ENCODE measurements at regions of chr2 and their contacts with region 1.

Region 1: DNA sequence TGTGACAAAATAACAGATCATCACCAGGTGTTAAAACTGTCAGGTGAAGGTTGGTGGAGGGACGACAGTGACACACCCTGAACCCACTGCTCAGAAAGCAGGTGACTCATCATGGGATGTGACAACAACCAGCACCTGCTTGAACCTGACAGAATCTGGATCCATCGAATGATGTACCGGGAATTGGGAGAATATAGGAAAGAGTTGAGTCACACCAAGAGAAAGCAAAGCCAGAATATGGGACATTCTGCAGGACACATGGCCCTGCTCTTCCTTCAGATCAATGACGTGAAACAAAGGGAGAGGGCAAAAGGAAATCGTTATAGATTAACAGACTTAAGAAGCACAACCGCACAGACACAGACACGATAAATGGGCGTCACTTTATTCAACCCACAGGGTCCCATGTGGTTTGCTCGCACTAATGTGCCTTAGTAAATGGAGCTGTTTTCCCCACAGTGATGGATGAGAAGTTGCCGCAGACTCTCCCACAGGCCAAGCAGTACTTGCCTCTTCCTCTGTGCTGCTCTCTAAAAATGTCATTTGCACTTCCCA is 100.1 kb downstream of the CRACDL start:
- DNase-seq: no peak
- H3K4me3 ChIP-seq: no peak overlapping the region
- H3K27ac ChIP-seq: no peak overlapping the region
- H3K4me1 ChIP-seq: no peaks in the 10 kb centered on the region
- H3K27me3 ChIP-seq: no peaks in the 10 kb centered on the region
- CTCF ChIP-seq: no peak
- POLR2A ChIP-seq: no peak

Region 2: GRCh38 chr2:98649135-98649991 is 186.5 kb before region 1 on chr2:
- intact Hi-C with region 1: loop called (anchors 10 kb)
- DNase-seq: peak; percentile 93
- H3K4me3 ChIP-seq: no peak overlapping the region
- H3K27ac ChIP-seq: no peak overlapping the region
- H3K4me1 ChIP-seq: no peaks in the 10 kb centered on the region
- H3K27me3 ChIP-seq: no peaks in the 10 kb centered on the region
- CTCF ChIP-seq: peak; percentile 94 to 97 (median 96)
- POLR2A ChIP-seq: no peak

Region 3: DNA sequence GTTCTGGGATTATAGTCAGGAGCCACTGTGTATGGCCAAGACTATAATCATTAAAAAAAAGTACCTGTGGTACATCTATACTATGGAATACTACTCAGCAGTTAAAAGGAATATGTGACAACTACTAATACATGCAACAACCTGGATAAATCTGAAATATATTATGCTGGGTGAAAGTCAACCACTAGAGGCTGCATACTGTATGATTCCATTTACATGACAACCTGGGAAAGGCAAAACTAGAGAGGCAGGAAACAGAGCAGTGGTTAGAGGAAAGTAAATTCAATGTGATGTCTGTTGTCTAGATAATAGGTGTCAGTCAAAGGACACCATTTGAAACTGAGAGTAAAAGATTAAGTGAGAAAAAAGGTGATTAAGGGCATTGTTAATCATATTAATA is 163.3 kb after region 1 on chr2:
- intact Hi-C with region 1: no loop called
- DNase-seq: no peak
- H3K4me3 ChIP-seq: no peak overlapping the region
- H3K27ac ChIP-seq: no peak overlapping the region
- H3K4me1 ChIP-seq: no peaks in the 10 kb centered on the region
- H3K27me3 ChIP-seq: no peaks in the 10 kb centered on the region
- CTCF ChIP-seq: no peak
- POLR2A ChIP-seq: no peak

Measured in testis (tissue), 5 donors.